Gastrocnemius medialis (tissue), 4 donors: ENCODE measurements at regions of chr18 and their contacts with region 1.

Region 1: GRCh38 chr18:52914148-52914547 is 574.2 kb downstream of the DCC start:
- DNase-seq: no peak
- ATAC-seq: no peak
- H3K4me3 ChIP-seq: no peak overlapping the region
- H3K27ac ChIP-seq: no peak overlapping the region
- H3K4me1 ChIP-seq: no peaks in the 10 kb centered on the region
- H3K27me3 ChIP-seq: no peaks in the 10 kb centered on the region
- CTCF ChIP-seq: no peak
- POLR2A ChIP-seq: no peak

Region 2: DNA sequence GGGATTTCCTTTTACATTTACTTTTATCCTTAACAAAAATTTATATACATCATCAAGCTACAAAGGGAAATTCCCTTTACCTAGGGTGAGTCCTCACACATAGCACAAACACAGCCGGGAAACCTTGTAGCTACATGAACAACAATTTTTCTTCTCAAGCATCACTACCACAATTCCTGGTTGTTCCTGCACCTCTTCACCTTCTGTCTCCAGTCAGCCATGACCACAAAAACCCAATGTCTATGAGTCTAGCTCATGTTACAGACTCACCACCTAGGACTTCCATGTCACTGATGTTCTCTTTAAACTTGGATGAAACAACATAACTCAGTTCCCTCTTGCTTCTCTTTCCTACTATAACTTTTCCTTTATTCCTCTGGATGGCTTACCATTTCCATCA is 849.9 kb after region 1 on chr18:
- in situ Hi-C with region 1: no loop called
- intact Hi-C with region 1: loop called (anchors 10 kb)
- DNase-seq: no peak
- ATAC-seq: no peak
- H3K4me3 ChIP-seq: no peak overlapping the region
- H3K27ac ChIP-seq: no peak overlapping the region
- H3K4me1 ChIP-seq: no peaks in the 10 kb centered on the region
- H3K27me3 ChIP-seq: no peaks in the 10 kb centered on the region
- CTCF ChIP-seq: no peak
- POLR2A ChIP-seq: no peak